ENCODE measurements at regions of chr19 and their contacts with region 1.

Region 1: GRCh38 chr19:1825909-1826556 is 14.0 kb upstream of the ATP8B3 start:
- DNase-seq: peak; percentile 49
- H3K4me3 ChIP-seq: no peak overlapping the region
- H3K27ac ChIP-seq: no peak overlapping the region
- H3K4me1 ChIP-seq: no peaks in the 10 kb centered on the region
- H3K27me3 ChIP-seq: no peaks in the 10 kb centered on the region
- CTCF ChIP-seq: peak; percentile 88 to 91
- POLR2A ChIP-seq: no peak

Region 2: GRCh38 chr19:1540365-1540925 is 285.6 kb before region 1 on chr19:
- CTCF ChIA-PET with region 1: interaction called, 30 read pairs
- POLR2A ChIA-PET with region 1: no interaction called
- dilution Hi-C with region 1: no loop called
- intact Hi-C with region 1: no loop called
- DNase-seq: no peak
- H3K4me3 ChIP-seq: no peak overlapping the region
- H3K27ac ChIP-seq: no peak overlapping the region
- H3K4me1 ChIP-seq: no peaks in the 10 kb centered on the region
- H3K27me3 ChIP-seq: no peaks in the 10 kb centered on the region
- CTCF ChIP-seq: no peak
- POLR2A ChIP-seq: no peak

Region 3: DNA sequence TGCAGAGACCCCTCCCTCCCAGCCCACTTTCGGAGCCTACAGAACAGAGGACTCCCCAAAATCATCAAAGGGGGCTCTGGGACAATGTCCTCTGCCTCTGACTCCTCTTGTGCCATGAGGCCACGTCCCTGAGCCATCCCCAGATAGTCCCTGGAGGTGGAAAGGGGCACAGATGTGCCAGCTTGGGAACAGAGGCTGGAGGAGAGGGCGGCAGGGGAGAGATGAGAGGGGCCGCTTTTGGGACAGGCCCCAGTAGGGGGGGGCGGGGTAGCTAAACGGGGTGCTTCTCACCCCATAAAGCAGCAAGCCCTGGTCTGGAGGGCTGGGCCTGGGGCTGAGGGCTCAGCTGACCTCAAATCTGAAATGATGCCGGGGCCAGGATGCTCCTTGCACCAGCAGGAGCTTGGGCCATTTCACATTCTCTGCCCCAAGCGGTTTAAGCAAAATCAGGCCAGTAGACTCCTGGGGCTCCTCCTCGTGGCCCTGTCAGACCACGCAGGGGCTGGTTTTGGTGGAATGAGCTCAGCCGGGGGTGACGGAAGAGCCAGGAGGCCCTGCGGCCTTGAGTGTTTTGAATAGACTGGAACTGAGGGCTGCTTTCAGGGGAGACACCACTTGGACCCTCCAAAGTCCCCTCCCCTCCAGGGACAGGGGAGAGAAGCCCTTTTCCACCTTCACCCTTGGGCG is 45.6 kb before region 1 on chr19:
- CTCF ChIA-PET with region 1: interaction called, 11 read pairs
- POLR2A ChIA-PET with region 1: no interaction called
- dilution Hi-C with region 1: no loop called
- intact Hi-C with region 1: loop called (anchors 5 kb)
- DNase-seq: no peak
- H3K4me3 ChIP-seq: no peak overlapping the region
- H3K27ac ChIP-seq: no peak overlapping the region
- H3K4me1 ChIP-seq: no peaks in the 10 kb centered on the region
- H3K27me3 ChIP-seq: peaks cover 17 to 30% of the 10 kb centered on the region in 2 experiments
- CTCF ChIP-seq: no peak
- POLR2A ChIP-seq: no peak

Region 4: DNA sequence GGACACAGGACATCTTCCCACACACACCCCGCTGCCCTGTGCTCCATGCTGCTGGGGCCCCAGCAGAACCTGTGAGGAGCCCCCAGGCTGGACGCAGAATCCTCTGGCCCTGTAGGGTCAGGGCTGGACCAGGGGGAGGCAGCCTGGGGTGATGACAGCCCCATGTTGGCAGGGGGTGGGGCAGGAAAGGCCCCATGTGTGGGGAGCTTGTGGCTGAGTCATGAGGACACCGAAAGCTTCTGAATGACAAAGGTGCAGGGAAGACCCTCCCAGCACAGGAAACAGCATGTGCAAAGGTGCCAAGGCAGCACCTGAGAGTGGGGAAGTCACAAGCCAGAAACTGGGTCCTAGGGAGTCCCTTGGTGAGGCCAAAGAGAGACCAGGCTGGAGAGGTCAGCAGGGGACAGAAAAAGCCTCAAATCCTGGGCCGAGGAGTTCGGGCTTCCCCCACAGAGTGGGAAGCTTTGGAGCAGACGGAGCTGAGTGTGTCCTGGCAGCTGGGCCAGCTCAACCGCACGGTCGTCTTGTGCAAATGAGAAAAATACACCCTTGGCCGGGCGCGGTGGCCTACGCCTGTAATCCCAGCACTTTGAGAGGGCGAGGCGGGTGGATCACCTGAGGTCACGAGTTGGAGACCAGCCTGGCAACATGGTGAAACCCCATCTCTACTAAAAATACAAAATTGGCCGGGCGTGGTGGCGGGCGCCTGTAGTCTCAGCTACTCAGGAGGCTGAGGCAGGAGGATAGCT is 31.4 kb before region 1 on chr19:
- CTCF ChIA-PET with region 1: interaction called, 15 read pairs
- POLR2A ChIA-PET with region 1: no interaction called
- dilution Hi-C with region 1: no loop called
- intact Hi-C with region 1: loop called (anchors 5 kb)
- DNase-seq: no peak
- H3K4me3 ChIP-seq: no peak overlapping the region
- H3K27ac ChIP-seq: no peak overlapping the region
- H3K4me1 ChIP-seq: no peaks in the 10 kb centered on the region
- H3K27me3 ChIP-seq: no peaks in the 10 kb centered on the region
- CTCF ChIP-seq: no peak
- POLR2A ChIP-seq: no peak

Region 5: GRCh38 chr19:1837625-1838105 is 11.6 kb after region 1 on chr19:
- CTCF ChIA-PET with region 1: interaction called, 83 read pairs
- POLR2A ChIA-PET with region 1: no interaction called
- dilution Hi-C with region 1: no loop called
- intact Hi-C with region 1: loop called (anchors 1 kb)
- DNase-seq: peak; percentile 44
- H3K4me3 ChIP-seq: no peak overlapping the region
- H3K27ac ChIP-seq: no peak overlapping the region
- H3K4me1 ChIP-seq: peaks cover 16% of the 10 kb centered on the region
- H3K27me3 ChIP-seq: no peaks in the 10 kb centered on the region
- CTCF ChIP-seq: peak; percentile 92 to 97
- POLR2A ChIP-seq: no peak